ENCODE measurements at regions of chr16 and their contacts with region 1.

Region 1: DNA sequence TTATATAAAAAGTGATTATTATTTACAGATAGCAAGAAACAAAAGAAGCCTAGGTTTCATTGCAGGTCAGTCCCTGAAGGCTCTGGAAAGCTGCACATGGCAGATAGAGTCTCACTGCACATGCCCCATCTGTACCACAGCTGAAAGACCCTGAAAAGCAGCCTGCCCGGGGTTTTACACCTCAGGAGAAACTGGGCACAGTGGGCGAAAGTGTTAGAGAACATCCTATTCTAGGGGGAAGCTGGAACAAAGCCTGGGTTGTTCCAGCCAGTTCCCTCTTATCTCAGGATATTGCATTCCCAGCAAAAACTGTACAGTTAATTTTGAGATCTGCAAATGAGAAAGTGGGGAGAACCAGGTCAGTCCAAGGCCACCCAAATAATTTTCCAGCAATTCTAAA is 419.7 kb downstream of the CNTNAP4 start:
- DNase-seq: no peak

Region 2: DNA sequence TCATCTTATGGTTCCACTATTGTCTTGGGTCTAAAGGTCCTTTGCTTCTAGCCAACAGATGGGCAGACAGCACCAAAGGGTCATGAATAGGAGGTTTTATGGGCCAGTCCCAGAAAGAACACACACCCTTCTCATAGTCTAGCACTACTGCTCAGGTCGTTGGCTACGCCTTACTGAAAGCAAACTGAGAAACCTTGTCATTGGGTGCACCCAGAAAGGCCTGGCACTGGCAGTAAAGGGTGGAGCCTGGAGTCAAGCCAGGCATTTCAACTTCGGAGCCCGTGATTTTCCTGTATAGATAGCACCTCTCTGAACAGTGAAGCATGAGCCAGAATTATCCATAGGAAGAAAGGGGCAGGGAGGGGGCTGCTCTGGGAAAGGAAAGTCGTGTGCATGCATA is 1166.4 kb after region 1 on chr16:
- intact Hi-C with region 1: loop called in 1 of 2 experiments (anchors 5 kb)
- DNase-seq: no peak

Measured in posterior vena cava (tissue), 2 donors.